ENCODE measurements at regions of chr11 and their contacts with region 1.

Region 1: DNA sequence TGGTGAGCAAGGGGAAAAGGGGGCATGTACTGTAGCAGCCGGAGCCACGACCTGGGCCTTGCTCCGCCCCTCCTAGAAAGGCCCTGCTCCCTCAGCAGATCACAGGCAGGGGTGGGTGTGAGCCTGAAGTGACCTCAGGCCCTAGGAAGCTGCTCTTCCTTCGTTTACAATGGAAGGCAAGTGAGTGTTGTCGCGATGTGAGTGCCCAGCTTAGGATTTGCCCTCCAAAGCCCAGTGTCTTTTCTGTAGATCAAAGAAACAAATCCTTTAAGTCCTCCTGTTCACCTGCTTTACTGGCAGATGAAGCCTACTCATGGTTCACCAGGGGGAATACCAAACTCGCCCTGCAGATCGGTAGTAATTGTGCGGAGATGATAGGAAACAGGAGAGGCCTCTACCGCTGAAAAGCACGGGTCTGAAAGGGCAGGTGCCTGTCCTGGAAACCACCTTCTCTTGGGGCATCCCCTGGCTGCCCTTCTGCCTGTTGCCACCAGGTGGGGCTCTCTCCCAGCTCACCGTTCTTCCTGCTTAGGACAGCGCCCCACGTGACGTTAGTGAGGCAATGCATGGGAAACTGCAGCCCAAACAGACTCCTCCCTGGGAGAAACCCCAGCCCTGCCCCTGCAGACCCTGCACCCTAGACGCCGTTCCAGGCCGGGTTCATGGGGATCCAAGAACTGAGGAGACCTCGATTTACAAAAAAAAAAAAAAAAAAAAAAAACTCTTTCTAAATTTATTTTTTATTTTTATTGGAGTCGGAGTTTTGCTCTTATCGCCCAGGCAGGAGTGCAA is 45.9 kb upstream of the RAB1B start:
- DNase-seq: peak; percentile 49
- H3K4me3 ChIP-seq: no peak overlapping the region
- CTCF ChIP-seq: peak; percentile 100

Region 2: DNA sequence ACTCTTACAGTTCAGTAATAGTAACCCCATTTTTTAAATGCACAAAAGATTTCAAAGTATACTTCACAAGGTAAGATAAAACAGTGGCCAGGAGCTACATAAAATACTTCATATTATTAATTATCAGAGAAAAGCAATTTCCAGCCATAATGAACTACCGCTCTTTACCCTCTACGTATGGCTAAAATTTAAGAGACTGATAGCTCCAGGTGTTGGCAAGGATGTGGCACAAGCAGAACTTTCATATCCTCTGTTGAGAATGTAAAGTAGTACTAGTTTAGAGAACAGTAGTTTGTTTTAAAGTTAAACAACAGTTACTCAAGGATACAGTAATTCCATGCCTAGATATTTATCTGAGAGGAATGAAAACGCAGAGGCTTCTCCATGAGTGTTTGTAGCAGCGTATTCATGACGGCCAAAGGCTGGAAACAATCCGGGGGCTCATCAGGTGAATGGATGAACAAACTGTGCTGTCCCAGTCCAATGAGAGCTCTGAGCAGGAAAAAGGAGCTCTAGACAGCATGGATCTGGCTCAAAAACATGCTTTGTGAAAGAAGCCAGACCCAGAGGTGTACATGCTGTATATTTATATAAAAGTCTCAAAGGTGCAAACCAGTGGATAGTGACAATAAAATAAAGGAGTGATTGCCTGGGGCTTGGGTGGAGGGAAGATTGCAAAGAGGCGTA is 67.0 kb before region 1 on chr11:
- CTCF ChIA-PET with region 1: interaction called, 15 read pairs
- POLR2A ChIA-PET with region 1: no interaction called
- DNase-seq: no peak
- H3K4me3 ChIP-seq: no peak overlapping the region
- CTCF ChIP-seq: no peak

Region 3: DNA sequence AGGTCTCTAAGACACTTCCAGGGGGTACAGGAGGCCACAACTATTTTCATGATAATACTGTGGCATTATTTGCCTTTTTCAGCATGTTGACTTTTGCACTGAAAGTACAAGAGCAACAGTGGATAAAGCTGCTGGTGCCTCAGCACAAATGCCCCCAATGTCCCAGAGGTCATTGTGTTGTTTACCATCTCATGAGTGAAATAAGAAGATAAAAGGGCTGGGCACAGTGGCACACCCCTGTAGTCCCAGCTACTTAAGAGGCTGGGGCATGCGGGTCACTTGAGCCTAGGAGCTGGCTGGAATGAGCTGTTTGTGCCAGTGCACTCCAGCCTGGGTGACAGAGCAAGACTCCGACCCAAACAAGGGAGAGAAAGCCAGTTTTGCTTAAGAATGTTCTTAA is 26.7 kb before region 1 on chr11:
- CTCF ChIA-PET with region 1: interaction called, 17 read pairs
- POLR2A ChIA-PET with region 1: no interaction called
- DNase-seq: no peak
- H3K4me3 ChIP-seq: no peak overlapping the region
- CTCF ChIP-seq: no peak

Region 4: DNA sequence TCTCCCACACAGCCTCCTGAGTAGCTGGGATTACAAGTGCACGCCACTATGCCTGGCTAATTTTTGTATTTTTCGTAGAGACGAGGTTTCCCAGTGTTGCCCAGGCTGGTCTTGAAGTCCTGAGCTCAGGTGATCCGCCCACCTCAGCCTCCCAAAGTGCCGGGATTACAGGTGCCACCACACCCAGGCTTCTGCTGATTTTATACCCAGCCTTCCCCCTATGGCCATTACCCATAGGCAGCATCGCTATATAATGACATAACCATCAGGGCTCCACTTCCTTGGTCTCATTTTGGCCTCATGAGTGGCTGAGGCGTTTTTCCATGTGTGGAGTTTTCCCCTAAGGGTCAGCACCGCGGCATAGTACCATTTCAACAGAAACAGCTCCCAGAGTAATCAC is 14.7 kb before region 1 on chr11:
- CTCF ChIA-PET with region 1: interaction called, 63 read pairs
- POLR2A ChIA-PET with region 1: no interaction called
- DNase-seq: no peak
- H3K4me3 ChIP-seq: no peak overlapping the region
- CTCF ChIP-seq: no peak

Region 5: GRCh38 chr11:66242095-66242765 is 19.7 kb after region 1 on chr11:
- CTCF ChIA-PET with region 1: interaction called, 130 read pairs
- POLR2A ChIA-PET with region 1: no interaction called
- DNase-seq: no peak
- H3K4me3 ChIP-seq: no peak overlapping the region
- CTCF ChIP-seq: no peak